PC-9 (cell line): ENCODE measurements at regions of chr10 and their contacts with region 1.

Region 1: DNA sequence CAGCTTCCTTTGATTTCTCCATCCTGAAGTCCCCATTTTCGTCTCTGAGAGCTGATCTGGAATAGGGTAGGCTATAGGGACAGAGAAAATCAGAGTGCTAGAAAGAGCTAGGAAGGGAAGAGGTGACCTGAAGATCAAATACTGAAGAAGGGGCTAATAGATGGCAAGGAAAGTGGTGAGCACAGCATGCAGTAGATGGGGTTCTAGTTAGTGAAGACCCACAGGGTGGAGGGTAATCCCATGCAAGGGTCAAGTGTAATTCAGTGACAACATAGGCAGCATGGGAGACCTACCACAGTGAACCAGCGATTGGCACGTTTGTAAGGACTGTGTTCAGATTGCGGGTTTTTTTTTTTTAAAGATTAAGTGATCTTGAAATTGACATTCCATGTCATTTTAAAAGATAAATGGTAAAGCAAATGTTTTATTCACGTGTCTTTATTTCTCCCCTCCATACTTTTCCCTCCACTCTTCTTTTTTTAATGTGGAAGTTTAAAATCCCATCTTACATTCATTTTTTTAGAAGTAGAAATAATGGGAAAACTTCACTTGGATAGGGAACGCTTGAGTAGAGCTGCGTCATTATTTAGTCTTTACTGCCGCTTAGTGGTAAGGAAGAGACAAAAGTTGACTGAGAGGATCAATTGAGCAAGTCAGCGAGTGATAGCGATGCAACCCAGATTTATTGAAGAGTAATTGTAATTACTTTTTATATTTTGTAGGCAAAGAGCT is 21.0 kb upstream of the ABI1 start:
- DNase-seq: peak in 1 of 2 experiments; percentile 53
- H3K4me3 ChIP-seq: no peak overlapping the region
- H3K27ac ChIP-seq: no peak overlapping the region
- H3K4me1 ChIP-seq: no peaks in the 10 kb centered on the region
- H3K27me3 ChIP-seq: no peaks in the 10 kb centered on the region
- CTCF ChIP-seq: peak; percentile 67

Region 2: DNA sequence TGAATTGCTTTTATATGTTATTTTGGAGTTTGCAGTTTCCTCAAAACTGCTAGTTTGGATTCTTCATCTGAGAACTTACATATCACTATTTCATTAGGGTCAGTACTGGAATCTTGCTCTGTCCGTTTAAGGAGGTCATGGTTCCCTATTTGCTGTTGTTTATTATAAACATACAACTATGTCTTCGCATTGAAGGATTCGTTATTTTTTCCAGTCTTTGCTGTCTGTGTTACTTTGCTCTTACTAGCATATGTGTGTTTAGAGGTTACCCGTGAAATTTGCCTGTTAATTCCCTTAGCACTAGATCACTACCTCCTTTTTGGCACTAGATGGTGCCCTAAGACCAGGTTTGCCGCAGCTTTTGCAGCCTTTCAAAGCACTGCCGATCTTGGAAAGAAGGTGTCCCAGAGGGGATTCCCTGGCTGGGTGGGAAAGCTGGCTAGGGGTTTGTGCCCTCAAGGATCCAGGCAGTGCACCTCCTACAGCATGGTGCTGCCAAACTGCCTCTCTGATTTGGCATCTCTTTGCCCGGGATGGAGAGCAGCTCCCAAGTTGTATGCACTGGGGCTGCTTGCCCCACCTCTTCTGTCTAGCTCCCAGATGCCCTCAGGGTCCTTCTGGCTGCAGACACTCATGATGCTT is 546.7 kb before region 1 on chr10:
- CTCF ChIA-PET with region 1: no interaction called
- POLR2A ChIA-PET with region 1: no interaction called
- intact Hi-C with region 1: loop called (anchors 2 kb)
- DNase-seq: peak in 1 of 2 experiments; percentile 28
- H3K4me3 ChIP-seq: no peak overlapping the region
- H3K27ac ChIP-seq: no peak overlapping the region
- H3K4me1 ChIP-seq: no peaks in the 10 kb centered on the region
- H3K27me3 ChIP-seq: 0 out of 2 replicates have a peak, but pooled peaks cover 2% of the 10 kb centered on the region
- CTCF ChIP-seq: peak; percentile 70

Region 3: DNA sequence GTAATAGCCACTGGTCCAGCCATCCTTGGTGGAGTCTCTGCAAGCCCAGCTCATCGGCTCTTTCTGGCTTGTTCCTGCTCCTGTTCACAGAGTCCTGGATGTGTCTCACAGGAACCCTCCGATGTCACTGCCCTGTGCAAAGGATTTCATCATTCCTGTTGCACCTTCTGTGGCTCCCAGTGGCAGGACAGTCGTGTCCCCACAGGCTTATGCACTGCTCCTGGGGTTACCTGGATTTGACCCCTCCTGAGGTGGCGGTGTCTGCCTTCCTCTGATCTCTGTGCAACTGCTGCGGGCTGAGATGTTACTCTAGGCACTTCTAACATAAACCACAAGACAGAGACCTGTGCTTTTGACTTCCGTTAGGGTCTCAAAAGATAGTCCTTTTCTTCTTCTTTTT is 413.1 kb before region 1 on chr10:
- CTCF ChIA-PET with region 1: no interaction called
- POLR2A ChIA-PET with region 1: no interaction called
- intact Hi-C with region 1: no loop called
- DNase-seq: no peak
- H3K4me3 ChIP-seq: no peak overlapping the region
- H3K27ac ChIP-seq: no peak overlapping the region
- H3K4me1 ChIP-seq: no peaks in the 10 kb centered on the region
- H3K27me3 ChIP-seq: no peaks in the 10 kb centered on the region
- CTCF ChIP-seq: no peak

Region 4: DNA sequence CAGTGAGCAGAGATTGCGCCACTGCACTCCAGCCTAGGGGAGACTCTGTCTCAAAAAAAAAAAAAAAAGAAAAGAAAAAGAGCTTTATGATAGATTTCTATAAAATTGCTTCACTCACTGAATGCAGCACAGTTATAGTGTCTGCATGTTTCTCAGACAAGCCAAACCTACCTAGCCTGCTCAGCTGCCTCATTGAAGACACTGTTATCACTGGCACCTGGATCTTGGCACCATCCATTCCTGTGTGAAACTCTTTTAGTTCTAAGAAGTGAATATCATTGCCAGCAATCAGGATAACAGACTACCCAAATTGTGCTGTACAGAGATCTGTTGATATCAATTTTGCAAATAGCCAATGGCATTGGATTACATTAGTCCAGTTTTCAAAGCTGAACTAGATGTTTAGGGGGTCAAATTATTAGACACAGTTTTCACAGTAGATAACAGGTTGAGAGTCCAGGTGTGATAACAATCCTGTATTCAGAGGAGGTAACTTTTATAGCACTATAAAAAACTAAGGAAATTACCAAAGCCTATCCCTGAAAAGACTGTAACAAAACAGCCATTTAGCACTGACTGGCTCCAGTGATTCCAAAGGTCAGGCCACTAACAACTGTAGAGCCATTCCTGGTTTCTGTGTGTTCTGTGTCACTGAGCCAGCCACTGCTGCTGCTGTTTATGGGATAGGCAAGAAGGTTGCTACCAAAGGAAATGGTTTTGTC is 167.2 kb before region 1 on chr10:
- CTCF ChIA-PET with region 1: no interaction called
- POLR2A ChIA-PET with region 1: no interaction called
- intact Hi-C with region 1: no loop called
- DNase-seq: no peak
- H3K4me3 ChIP-seq: no peak overlapping the region
- H3K27ac ChIP-seq: no peak overlapping the region
- H3K4me1 ChIP-seq: no peaks in the 10 kb centered on the region
- H3K27me3 ChIP-seq: no peaks in the 10 kb centered on the region
- CTCF ChIP-seq: no peak

Region 5: GRCh38 chr10:26725837-26726727 is 155.7 kb before region 1 on chr10:
- CTCF ChIA-PET with region 1: interaction called, 26 read pairs
- POLR2A ChIA-PET with region 1: no interaction called
- intact Hi-C with region 1: loop called (anchors 1 kb)
- DNase-seq: peak in 1 of 2 experiments; percentile 32
- H3K4me3 ChIP-seq: no peak overlapping the region
- H3K27ac ChIP-seq: no peak overlapping the region
- H3K4me1 ChIP-seq: no peaks in the 10 kb centered on the region
- H3K27me3 ChIP-seq: no peaks in the 10 kb centered on the region
- CTCF ChIP-seq: peak; percentile 83

Region 6: DNA sequence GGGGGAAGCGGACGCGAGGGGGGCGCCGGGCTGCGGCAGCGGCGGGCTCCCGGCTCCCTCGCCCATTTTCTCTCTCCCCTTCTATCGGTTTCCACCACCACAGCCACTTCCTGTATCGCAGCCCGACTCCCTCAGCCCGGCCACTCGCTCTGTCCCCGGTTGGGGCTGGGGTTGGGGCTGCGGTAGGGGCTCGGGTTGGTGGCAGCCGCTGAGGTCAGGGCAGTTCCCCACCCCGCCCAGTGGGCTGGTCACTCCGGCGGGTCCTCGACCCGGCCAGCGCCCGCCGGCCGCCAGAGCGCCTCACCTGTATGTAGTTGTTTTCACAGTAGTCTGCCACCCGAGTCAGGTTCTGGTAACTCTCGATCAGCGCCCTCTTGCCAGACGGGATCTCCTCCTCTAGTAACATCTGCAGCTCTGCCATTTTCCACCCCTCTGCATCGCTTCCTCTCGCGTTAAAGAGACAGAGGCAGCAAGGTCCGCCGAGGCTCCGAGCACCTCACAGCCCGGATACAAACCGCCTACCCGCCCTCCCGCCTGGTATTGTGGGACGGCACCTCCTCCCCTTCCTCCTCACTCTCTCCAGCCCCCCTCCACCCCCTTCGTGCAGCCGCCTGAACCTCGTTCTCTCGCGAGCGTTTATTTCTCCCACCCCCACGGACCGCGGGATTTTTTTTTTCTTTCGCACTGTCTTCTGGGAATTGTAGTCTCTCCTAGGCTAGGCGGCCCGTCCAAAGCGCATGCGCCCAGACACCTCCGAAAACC is 21.1 kb before region 1 on chr10 and contains the start of gene ABI1:
- CTCF ChIA-PET with region 1: interaction called, 3 read pairs
- POLR2A ChIA-PET with region 1: no interaction called
- intact Hi-C with region 1: loop called (anchors 1 kb)
- DNase-seq: peak; percentile 89 to 96
- H3K4me3 ChIP-seq: peak within 1 kb of the TSS; percentile 72
- H3K27ac ChIP-seq: peak within 1 kb of the TSS; percentile 85
- H3K4me1 ChIP-seq: peaks cover 11% of the 10 kb centered on the region
- H3K27me3 ChIP-seq: no peaks in the 10 kb centered on the region
- CTCF ChIP-seq: no peak
- total RNA-seq, gene ABI1: 41.3 and 50.8 TPM in 2 replicates

Region 7: DNA sequence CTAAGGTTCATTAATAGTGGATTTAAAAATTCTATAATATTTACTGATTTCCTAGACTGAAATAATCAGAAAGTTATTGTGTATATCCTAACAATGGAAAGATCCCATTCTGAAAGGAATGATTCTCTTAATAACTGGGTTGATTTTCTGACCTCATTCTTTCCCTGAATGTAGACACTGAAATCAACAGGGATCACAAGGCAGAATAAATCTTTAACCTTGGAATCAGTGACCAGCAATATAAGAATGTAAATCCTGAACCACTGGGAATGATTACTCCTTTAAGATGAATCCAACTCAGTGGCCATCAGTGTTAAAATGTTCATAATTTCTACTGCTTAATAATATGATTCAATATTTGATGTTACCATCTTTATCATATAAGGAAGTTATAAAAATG is 170.9 kb after region 1 on chr10:
- CTCF ChIA-PET with region 1: no interaction called
- POLR2A ChIA-PET with region 1: no interaction called
- intact Hi-C with region 1: no loop called
- DNase-seq: no peak
- H3K4me3 ChIP-seq: no peak overlapping the region
- H3K27ac ChIP-seq: no peak overlapping the region
- H3K4me1 ChIP-seq: no peaks in the 10 kb centered on the region
- H3K27me3 ChIP-seq: no peaks in the 10 kb centered on the region
- CTCF ChIP-seq: no peak